ENCODE measurements at regions of chr10 and their contacts with region 1.

Region 1: GRCh38 chr10:35563261-35563891 is 41.8 kb upstream of the GJD4 start:
- DNase-seq: peak in 3 of 10 donors; percentile 38 to 61 (median 50)
- H3K4me3 ChIP-seq: no peak overlapping the region
- H3K27ac ChIP-seq: peak overlapping the region in 22 of 59 donors; percentile 2 to 84 (median 62)
- H3K27me3 ChIP-seq: no peaks in the 10 kb centered on the region
- CTCF ChIP-seq: peak; percentile 74 to 96 (median 89)

Region 2: GRCh38 chr10:35236739-35237138 is 326.6 kb before region 1 on chr10:
- intact Hi-C with region 1: loop called in 1 of 2 experiments (anchors 10 kb)
- DNase-seq: no peak
- H3K4me3 ChIP-seq: no peak overlapping the region
- H3K27ac ChIP-seq: no peak overlapping the region
- H3K27me3 ChIP-seq: no peaks in the 10 kb centered on the region
- CTCF ChIP-seq: peak in 27 of 56 donors; percentile 12 to 59 (median 27)

Region 3: GRCh38 chr10:35336084-35336831 is 227.1 kb before region 1 on chr10 and contains the start of gene CCNY:
- intact Hi-C with region 1: loop called (anchors 5 kb)
- DNase-seq: peak; percentile 54 to 86 (median 68)
- H3K4me3 ChIP-seq: peak within 1 kb of the TSS; percentile 71 to 99 (median 94)
- H3K27ac ChIP-seq: peak within 1 kb of the TSS in 58 of 59 donors; percentile 41 to 94 (median 84)
- H3K27me3 ChIP-seq: no peaks in the 10 kb centered on the region
- CTCF ChIP-seq: peak in 10 of 56 donors; percentile 8 to 29 (median 21)
- total RNA-seq, gene CCNY: 62.3 to 136 (median 97.7) TPM

Region 4: GRCh38 chr10:35462491-35462934 is 100.9 kb before region 1 on chr10:
- intact Hi-C with region 1: loop called in 1 of 2 experiments (anchors 5 kb)
- DNase-seq: peak in 3 of 10 donors; percentile 56 to 65 (median 62)
- H3K4me3 ChIP-seq: peak overlapping the region in 6 of 59 donors; percentile 4 to 28 (median 14)
- H3K27ac ChIP-seq: peak overlapping the region; percentile 27 to 100 (median 92)
- H3K27me3 ChIP-seq: no peaks in the 10 kb centered on the region
- CTCF ChIP-seq: peak in 4 of 56 donors; percentile 11 to 31 (median 22)

Region 5: GRCh38 chr10:35526746-35527145 is 36.6 kb before region 1 on chr10:
- intact Hi-C with region 1: loop called in 1 of 2 experiments (anchors 5 kb)
- DNase-seq: no peak
- H3K4me3 ChIP-seq: no peak overlapping the region
- H3K27ac ChIP-seq: peak overlapping the region in 6 of 59 donors; percentile 6 to 42 (median 22)
- H3K27me3 ChIP-seq: no peaks in the 10 kb centered on the region
- CTCF ChIP-seq: no peak

Region 6: DNA sequence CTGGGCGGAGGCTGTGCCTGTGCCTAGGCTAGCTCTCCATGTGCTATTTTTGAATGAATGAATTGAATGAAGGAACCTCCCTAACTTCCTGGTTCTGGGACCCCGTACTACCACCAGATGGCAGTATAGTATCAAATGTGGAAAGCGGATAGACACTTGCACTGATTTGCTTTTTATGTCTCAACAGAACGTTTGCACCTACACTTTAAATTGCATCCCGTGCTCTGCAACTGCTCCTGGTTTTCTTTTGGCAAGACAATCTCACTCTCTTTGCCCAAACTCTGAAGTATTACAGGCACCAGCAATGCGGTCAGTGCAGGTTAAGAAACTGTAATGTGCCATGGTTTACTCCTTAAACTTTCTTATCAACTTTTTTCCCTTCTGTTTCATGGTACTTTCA is 72.2 kb after region 1 on chr10:
- intact Hi-C with region 1: loop called in 1 of 2 experiments (anchors 5 kb)
- DNase-seq: peak in 2 of 10 donors; percentile 25 to 57
- H3K4me3 ChIP-seq: peak overlapping the region in 1 of 59 donors; percentile 1
- H3K27ac ChIP-seq: no peak overlapping the region
- H3K27me3 ChIP-seq: no peaks in the 10 kb centered on the region
- CTCF ChIP-seq: peak; percentile 80 to 99 (median 96)